ENCODE measurements at regions of chr2 and their contacts with region 1.

Region 1: DNA sequence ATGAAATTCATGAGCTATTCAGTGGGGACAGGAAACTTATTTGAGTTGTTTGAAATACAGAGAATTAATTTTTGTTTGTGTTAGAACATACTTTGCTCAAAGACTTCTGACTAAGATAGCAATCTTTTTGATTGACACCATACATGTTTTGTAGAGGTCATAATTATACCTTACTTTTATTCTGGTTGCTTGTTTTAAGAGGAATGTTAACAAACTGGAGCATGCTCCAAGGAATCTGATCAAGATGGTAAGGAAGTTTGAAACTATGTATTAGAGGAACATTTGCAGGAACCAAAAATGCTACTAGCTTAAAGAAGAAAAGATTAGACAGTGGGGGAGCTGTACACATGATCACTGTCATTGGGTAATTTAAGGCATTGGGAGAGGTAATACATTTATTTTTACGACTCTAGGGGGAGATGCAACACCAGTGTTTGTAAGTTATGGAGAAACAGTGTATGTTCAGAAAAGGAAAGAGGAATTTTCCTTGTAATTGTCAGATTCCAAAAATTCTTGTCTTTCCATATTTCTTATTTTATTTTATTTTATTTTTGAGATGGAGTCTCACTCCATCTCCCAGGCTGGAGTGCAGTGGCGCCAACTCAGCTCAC is 8.0 kb downstream of the AGFG1 start:
- DNase-seq: no peak

Region 2: GRCh38 chr2:227655454-227655853 is 175.5 kb after region 1 on chr2:
- intact Hi-C with region 1: loop called (anchors 5 kb)
- DNase-seq: no peak